Body of pancreas (tissue), 4 donors: ENCODE measurements at regions of chr11 and their contacts with region 1.

Region 1: GRCh38 chr11:75280227-75280701 is 39.7 kb downstream of the TPBGL start:
- DNase-seq: peak; percentile 77 to 82 (median 80)
- ATAC-seq: peak; percentile 78
- H3K4me3 ChIP-seq: no peak overlapping the region
- H3K27ac ChIP-seq: no peak overlapping the region
- H3K4me1 ChIP-seq: no peaks in the 10 kb centered on the region
- H3K27me3 ChIP-seq: no peaks in the 10 kb centered on the region
- CTCF ChIP-seq: peak; percentile 81 to 97 (median 95)
- POLR2A ChIP-seq: no peak

Region 2: DNA sequence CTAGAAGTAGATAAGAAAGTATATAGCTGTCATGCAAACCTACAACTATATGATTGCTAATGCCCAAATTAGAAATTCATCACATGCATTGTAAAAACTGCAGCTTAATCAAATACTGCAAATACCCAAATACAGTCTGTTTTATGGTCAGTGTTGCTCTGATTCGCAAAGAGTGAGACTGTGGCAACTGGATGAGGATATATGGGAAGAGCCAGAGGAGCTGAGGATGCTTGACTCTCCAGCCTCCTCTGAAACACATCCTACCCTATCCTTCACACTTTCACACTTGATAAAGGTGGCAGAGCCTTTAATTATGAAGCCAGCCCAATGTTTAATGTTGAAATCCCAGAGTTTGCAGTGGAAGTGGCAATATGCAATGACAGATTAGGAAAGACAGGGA is 161.7 kb before region 1 on chr11:
- intact Hi-C with region 1: no loop called
- DNase-seq: no peak
- ATAC-seq: no peak
- H3K4me3 ChIP-seq: no peak overlapping the region
- H3K27ac ChIP-seq: no peak overlapping the region
- H3K4me1 ChIP-seq: no peaks in the 10 kb centered on the region
- H3K27me3 ChIP-seq: no peaks in the 10 kb centered on the region
- CTCF ChIP-seq: no peak
- POLR2A ChIP-seq: no peak

Region 3: DNA sequence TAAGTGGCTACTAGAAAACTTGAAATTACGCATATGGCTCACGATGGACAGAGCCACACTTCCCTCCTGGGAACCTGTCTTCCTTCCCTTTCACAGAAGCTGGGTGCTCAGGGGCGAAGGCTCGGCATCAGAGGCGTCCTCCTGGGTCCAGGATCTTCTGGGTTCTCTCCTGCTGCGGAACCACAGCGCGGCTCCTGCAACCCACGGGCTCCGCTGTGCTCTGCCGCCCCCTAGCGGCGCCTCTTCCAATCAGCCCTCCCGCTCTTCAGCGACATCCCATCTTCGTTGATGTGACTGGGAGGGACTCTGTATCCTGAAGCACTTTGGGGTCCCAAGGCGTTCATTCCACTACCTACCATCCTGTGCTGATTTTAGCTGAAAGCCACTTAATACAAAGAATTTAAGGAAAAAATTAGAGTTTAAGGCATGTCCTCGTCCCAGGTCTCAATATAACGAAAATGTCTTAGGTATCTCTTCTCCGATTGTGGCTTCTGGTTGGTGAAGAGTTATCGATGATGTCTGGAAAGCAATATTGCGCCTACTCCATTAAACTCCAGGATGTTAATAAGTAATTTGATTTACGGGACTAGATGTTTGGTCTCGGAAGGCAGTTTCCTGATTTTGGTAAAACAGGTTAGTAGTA is 104.3 kb after region 1 on chr11:
- intact Hi-C with region 1: loop called (anchors 5 kb)
- DNase-seq: peak; percentile 77 to 82 (median 80)
- ATAC-seq: peak; percentile 70
- H3K4me3 ChIP-seq: no peak overlapping the region
- H3K27ac ChIP-seq: no peak overlapping the region
- H3K4me1 ChIP-seq: peaks cover 6% of the 10 kb centered on the region
- H3K27me3 ChIP-seq: no peaks in the 10 kb centered on the region
- CTCF ChIP-seq: peak; percentile 89 to 95 (median 94)
- POLR2A ChIP-seq: no peak

Region 4: GRCh38 chr11:75406338-75406777 is 126.1 kb after region 1 on chr11:
- intact Hi-C with region 1: no loop called
- DNase-seq: no peak
- ATAC-seq: no peak
- H3K4me3 ChIP-seq: no peak overlapping the region
- H3K27ac ChIP-seq: no peak overlapping the region
- H3K4me1 ChIP-seq: peaks cover 20% of the 10 kb centered on the region
- H3K27me3 ChIP-seq: no peaks in the 10 kb centered on the region
- CTCF ChIP-seq: no peak
- POLR2A ChIP-seq: no peak

Region 5: GRCh38 chr11:75532200-75533048 is 252.2 kb after region 1 on chr11:
- intact Hi-C with region 1: loop called (anchors 10 kb)
- DNase-seq: peak; percentile 56 to 79 (median 70)
- ATAC-seq: peak; percentile 81
- H3K4me3 ChIP-seq: no peak overlapping the region
- H3K27ac ChIP-seq: no peak overlapping the region
- H3K4me1 ChIP-seq: peaks cover 3% of the 10 kb centered on the region
- H3K27me3 ChIP-seq: no peaks in the 10 kb centered on the region
- CTCF ChIP-seq: peak; percentile 63 to 92 (median 88)
- POLR2A ChIP-seq: no peak